Dorsolateral prefrontal cortex (tissue), 120 donors: ENCODE measurements at regions of chr19 and their contacts with region 1.

Region 1: GRCh38 chr19:39550197-39550596 is 10.2 kb upstream of the EID2 start:
- DNase-seq: no peak
- H3K4me3 ChIP-seq: no peak overlapping the region
- H3K27ac ChIP-seq: no peak overlapping the region
- H3K27me3 ChIP-seq: peaks cover 0 to 3% (median 0%) of the 10 kb centered on the region in 45 donors
- CTCF ChIP-seq: no peak

Region 2: GRCh38 chr19:39623221-39623620 is 73.0 kb after region 1 on chr19:
- intact Hi-C with region 1: no loop called
- DNase-seq: no peak
- H3K4me3 ChIP-seq: no peak overlapping the region
- H3K27ac ChIP-seq: no peak overlapping the region
- H3K27me3 ChIP-seq: peaks cover 0 to 46% (median 10%) of the 10 kb centered on the region in 45 donors
- CTCF ChIP-seq: no peak

Region 3: GRCh38 chr19:39671738-39672363 is 121.7 kb after region 1 on chr19:
- intact Hi-C with region 1: loop called (anchors 2 kb)
- DNase-seq: peak in 1 of 10 donors; percentile 18
- H3K4me3 ChIP-seq: no peak overlapping the region
- H3K27ac ChIP-seq: no peak overlapping the region
- H3K27me3 ChIP-seq: peaks cover 0 to 7% (median 0%) of the 10 kb centered on the region in 45 donors
- CTCF ChIP-seq: peak; percentile 35 to 82 (median 64)

Region 4: GRCh38 chr19:39704181-39705044 is 154.2 kb after region 1 on chr19 and contains the start of gene LGALS14:
- intact Hi-C with region 1: no loop called
- DNase-seq: no peak
- H3K4me3 ChIP-seq: no peak within 1 kb of the TSS
- H3K27ac ChIP-seq: no peak within 1 kb of the TSS
- H3K27me3 ChIP-seq: peaks cover 0 to 17% (median 0%) of the 10 kb centered on the region in 45 donors
- CTCF ChIP-seq: no peak
- total RNA-seq, gene LGALS14: not detected